GM12878 (cell line): ENCODE measurements at regions of chr2 and their contacts with region 1.

Region 1: GRCh38 chr2:135913727-135914365 is 37.6 kb upstream of the MCM6 start:
- DNase-seq: no peak
- ATAC-seq: peak; percentile 75
- H3K4me3 ChIP-seq: no peak overlapping the region
- H3K27ac ChIP-seq: no peak overlapping the region
- H3K4me1 ChIP-seq: no peaks in the 10 kb centered on the region
- H3K27me3 ChIP-seq: no peaks in the 10 kb centered on the region
- CTCF ChIP-seq: peak; percentile 58 to 68 (median 63); a peak in 5 of 6 replicates
- EP300 ChIP-seq: no peak
- POLR2A ChIP-seq: no peak
- RAD21 ChIP-seq: peak; percentile 75

Region 2: DNA sequence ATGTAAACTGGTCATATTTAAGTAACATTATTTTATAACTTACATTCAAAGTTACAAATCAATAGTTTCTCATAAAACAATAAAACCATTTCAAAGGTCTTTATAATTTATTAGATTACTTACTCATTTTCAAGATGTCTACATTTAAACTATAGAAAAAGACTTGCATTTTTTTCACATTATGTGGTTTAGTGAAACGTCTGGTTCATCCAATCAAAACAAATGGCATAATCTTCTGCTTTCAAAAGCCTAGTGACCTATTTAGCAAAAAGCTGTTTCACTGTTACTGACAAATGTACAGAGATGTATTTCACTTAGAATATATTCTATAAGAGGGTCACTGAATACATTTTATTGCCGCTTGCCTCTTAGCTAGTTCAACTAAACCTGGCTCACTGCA is 11.7 kb after region 1 on chr2:
- CTCF ChIA-PET with region 1: interaction called, 21 read pairs
- POLR2A ChIA-PET with region 1: interaction called, 4 read pairs
- RAD21 ChIA-PET with region 1: interaction called, 4 read pairs
- SMC1A ChIA-PET with region 1: interaction called, 18 read pairs
- in situ Hi-C with region 1: no loop called
- intact Hi-C with region 1: no loop called
- DNase-seq: no peak
- ATAC-seq: no peak
- H3K4me3 ChIP-seq: no peak overlapping the region
- H3K27ac ChIP-seq: no peak overlapping the region
- H3K4me1 ChIP-seq: no peaks in the 10 kb centered on the region
- H3K27me3 ChIP-seq: no peaks in the 10 kb centered on the region
- CTCF ChIP-seq: no peak
- EP300 ChIP-seq: no peak
- POLR2A ChIP-seq: no peak
- RAD21 ChIP-seq: no peak

Region 3: GRCh38 chr2:136013955-136014354 is 100.1 kb after region 1 on chr2:
- CTCF ChIA-PET with region 1: interaction called, 6 read pairs
- POLR2A ChIA-PET with region 1: interaction called, 6 read pairs
- RAD21 ChIA-PET with region 1: interaction called, 11 read pairs
- SMC1A ChIA-PET with region 1: interaction called, 6 read pairs
- in situ Hi-C with region 1: no loop called
- intact Hi-C with region 1: no loop called
- DNase-seq: no peak
- ATAC-seq: no peak
- H3K4me3 ChIP-seq: no peak overlapping the region
- H3K27ac ChIP-seq: no peak overlapping the region
- H3K4me1 ChIP-seq: peaks cover 3% of the 10 kb centered on the region; the same call in 1 of the 2 replicates
- H3K27me3 ChIP-seq: no peaks in the 10 kb centered on the region
- CTCF ChIP-seq: no peak
- EP300 ChIP-seq: no peak
- POLR2A ChIP-seq: no peak
- RAD21 ChIP-seq: no peak

Region 4: DNA sequence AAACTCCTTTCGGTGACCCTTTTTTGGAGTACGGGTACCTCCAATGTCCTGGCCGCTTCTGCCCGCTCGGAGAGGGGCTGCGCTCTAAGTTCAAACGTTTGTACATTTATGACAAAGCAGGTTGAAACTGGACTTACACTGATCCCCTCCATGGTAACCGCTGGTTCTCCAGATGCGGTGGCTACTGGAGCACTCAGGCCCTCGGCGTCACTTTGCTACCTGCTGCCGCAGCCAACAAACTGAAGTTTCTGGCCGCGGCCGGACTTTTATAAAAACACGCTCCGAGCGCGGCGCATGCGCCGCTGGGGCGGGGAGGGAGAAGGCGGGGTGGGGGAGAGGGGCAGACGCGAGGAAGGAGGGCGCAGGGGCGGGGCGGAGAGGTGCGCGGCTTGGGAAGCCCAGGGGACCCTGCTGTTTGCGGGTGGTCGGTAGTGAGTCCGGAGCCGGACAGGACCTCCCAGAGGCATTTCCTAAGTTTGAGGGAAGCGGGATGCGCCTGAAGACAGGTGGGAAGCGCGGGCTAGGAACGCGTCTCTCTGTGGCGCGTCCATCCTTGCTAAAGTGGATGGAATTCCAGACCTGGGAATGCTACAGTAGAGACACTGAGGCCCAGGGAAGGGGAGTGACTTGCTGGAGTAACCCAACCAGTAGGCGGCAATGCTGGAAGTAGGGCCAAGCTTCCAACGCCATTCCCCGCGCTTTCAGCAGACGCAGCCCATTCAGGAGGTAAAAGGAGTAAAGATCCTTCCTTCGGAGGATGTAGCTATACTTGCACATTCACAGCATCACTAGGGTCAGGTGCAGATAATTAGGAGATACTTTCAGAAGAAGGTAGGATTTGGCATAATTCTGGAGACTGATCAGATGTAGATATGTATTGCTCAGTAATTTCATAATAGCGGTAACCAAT is 204.3 kb after region 1 on chr2 and contains the start of gene CXCR4:
- CTCF ChIA-PET with region 1: interaction called, 10 read pairs
- POLR2A ChIA-PET with region 1: no interaction called
- RAD21 ChIA-PET with region 1: interaction called, 4 read pairs
- SMC1A ChIA-PET with region 1: interaction called, 5 read pairs
- in situ Hi-C with region 1: loop called (anchors 5 kb)
- intact Hi-C with region 1: loop called (anchors 1 kb)
- DNase-seq: no peak
- ATAC-seq: peak; percentile 43
- H3K4me3 ChIP-seq: peak within 1 kb of the TSS; percentile 85
- H3K27ac ChIP-seq: peak within 1 kb of the TSS; percentile 40; the same call in 1 of the 2 replicates
- H3K4me1 ChIP-seq: peaks cover 2% of the 10 kb centered on the region; the same call in 1 of the 2 replicates
- H3K27me3 ChIP-seq: peaks cover 0 to 12% of the 10 kb centered on the region in 2 experiments
- CTCF ChIP-seq: peak in 1 of 3 experiments; percentile 19; a peak in 1 of 6 replicates
- EP300 ChIP-seq: no peak
- POLR2A ChIP-seq: peak; percentile 97
- RAD21 ChIP-seq: 0 out of 2 replicates have a peak, but pooled peaks have one; percentile 9
- polyA plus RNA-seq, gene CXCR4: 31.1 to 32.3 TPM